ENCODE measurements at regions of chr2 and their contacts with region 1.

Region 1: DNA sequence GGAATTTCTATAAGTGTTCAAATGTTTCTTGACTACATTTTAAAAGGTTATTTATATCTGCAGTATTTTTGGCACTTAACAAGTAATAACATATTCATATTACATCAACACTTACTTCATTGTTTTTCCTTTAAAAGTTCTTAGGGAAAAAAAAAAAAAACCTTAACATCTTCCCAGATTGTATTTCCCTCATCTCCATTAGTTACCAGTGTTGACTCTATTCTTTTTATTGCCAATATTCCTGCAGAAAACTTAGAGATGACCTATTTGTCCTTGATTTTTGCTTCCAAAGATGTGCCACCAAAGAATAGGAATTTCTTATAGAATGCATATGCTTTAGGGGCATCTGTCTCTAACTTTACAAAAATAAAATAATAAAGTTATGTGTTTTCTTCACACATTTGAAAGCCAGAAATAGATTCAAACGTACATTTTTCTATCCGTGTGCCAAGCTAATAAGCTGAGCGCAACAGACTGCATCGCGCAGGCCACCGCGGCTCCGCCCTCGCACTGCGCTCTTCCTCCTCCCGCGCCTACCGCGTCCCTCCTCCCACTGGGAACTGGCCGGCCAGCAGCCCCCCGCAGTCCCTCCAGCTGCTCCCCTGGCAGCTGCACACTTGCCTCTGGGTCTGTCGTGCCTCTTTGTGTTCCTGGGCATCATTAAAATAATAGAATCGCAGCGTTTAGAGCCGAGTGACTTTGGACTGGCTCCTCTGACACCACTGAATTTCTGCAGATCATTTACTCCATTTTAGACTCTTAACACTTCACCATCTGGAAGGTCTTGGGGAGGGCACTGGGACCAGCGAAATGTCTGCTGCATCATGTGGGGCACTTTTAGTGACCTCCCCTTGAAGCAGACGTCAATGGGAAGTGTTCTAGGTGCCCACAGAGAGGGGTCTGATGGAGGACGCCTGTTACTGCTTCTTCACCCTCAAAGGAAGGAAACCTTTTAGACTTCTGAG is 21.2 kb upstream of the NAB1 start:
- DNase-seq: peak in 8 of 10 donors; percentile 17 to 63 (median 44)
- ATAC-seq: peak; percentile 91 to 93
- H3K4me3 Mint-ChIP-seq: peak overlapping the region; percentile 92 to 99 (median 96)
- H3K27ac Mint-ChIP-seq: peak overlapping the region; percentile 86 to 97 (median 94)
- H3K4me1 Mint-ChIP-seq: peaks cover 21 to 35% (median 27%) of the 10 kb centered on the region in 4 donors
- H3K27me3 Mint-ChIP-seq: no peaks in the 10 kb centered on the region

Region 2: GRCh38 chr2:190648289-190649034 is 20.7 kb after region 1 on chr2:
- POLR2A ChIA-PET with region 1: interaction called, 14 read pairs
- DNase-seq: peak; percentile 86 to 96 (median 90)
- ATAC-seq: peak; percentile 73 to 79
- H3K4me3 Mint-ChIP-seq: peak overlapping the region; percentile 81 to 93 (median 86)
- H3K27ac Mint-ChIP-seq: peak overlapping the region; percentile 73 to 97 (median 90)
- H3K4me1 Mint-ChIP-seq: peaks cover 12 to 42% (median 30%) of the 10 kb centered on the region in 4 donors
- H3K27me3 Mint-ChIP-seq: no peaks in the 10 kb centered on the region